ENCODE measurements at regions of chr12 and their contacts with region 1.

Region 1: GRCh38 chr12:15453613-15454012 is 131.3 kb downstream of the PTPRO start:
- DNase-seq: no peak
- H3K4me3 ChIP-seq: no peak overlapping the region
- H3K27ac ChIP-seq: no peak overlapping the region
- H3K4me1 ChIP-seq: no peaks in the 10 kb centered on the region
- H3K27me3 ChIP-seq: no peaks in the 10 kb centered on the region
- CTCF ChIP-seq: no peak

Region 2: GRCh38 chr12:15368812-15369211 is 84.8 kb before region 1 on chr12:
- CTCF ChIA-PET with region 1: no interaction called
- POLR2A ChIA-PET with region 1: no interaction called
- intact Hi-C with region 1: no loop called
- DNase-seq: no peak
- H3K4me3 ChIP-seq: no peak overlapping the region
- H3K27ac ChIP-seq: no peak overlapping the region
- H3K4me1 ChIP-seq: peaks cover 20% of the 10 kb centered on the region
- H3K27me3 ChIP-seq: no peaks in the 10 kb centered on the region
- CTCF ChIP-seq: no peak

Region 3: DNA sequence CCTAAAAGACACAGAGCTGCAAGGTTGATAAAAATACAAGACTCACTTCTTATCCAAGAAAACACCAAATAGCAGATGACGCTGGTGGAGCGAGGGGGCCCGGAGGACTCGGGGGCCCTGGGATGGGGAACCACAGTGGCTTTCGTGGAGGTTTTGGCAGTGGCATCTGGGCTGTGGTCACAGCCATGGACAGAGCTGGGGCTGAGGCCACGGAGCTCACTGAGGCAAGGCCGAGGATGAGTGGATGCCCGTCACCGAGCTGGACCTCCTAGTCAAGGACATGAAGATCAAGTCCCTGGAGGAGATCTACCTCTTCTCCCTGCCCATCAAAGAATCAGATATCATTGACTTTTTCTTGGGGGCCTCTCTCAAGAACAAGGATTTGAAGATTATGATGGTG is 14.2 kb before region 1 on chr12:
- CTCF ChIA-PET with region 1: no interaction called
- POLR2A ChIA-PET with region 1: no interaction called
- intact Hi-C with region 1: loop called (anchors 2 kb)
- DNase-seq: no peak
- H3K4me3 ChIP-seq: no peak overlapping the region
- H3K27ac ChIP-seq: no peak overlapping the region
- H3K4me1 ChIP-seq: 0 out of 2 replicates have a peak, but pooled peaks cover 4% of the 10 kb centered on the region
- H3K27me3 ChIP-seq: no peaks in the 10 kb centered on the region
- CTCF ChIP-seq: no peak

Region 4: DNA sequence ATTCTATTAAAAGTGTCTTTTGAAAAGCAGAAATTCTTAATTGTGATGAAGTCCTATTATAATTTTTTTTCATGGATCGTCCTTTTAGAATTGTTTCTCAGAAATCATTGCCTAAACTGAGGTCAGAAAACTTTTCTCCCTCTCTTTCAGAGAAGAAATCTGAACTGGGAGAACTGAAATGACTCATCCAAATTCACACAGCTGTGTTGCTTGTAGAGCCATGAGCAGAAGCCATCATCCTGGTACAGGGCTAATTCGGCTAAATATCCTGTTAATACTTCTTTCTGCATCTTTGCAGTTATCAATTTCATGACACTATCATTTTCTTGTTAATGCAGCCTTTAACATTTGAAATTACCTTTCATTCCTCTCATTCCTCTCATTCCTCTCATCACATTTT is 808.3 kb after region 1 on chr12:
- CTCF ChIA-PET with region 1: no interaction called
- POLR2A ChIA-PET with region 1: no interaction called
- intact Hi-C with region 1: no loop called
- DNase-seq: no peak
- H3K4me3 ChIP-seq: no peak overlapping the region
- H3K27ac ChIP-seq: no peak overlapping the region
- H3K4me1 ChIP-seq: no peaks in the 10 kb centered on the region
- H3K27me3 ChIP-seq: no peaks in the 10 kb centered on the region
- CTCF ChIP-seq: no peak

Measured in PC-9 (cell line).